HEK293 (cell line): ENCODE measurements at regions of chr17 and their contacts with region 1.

Region 1: DNA sequence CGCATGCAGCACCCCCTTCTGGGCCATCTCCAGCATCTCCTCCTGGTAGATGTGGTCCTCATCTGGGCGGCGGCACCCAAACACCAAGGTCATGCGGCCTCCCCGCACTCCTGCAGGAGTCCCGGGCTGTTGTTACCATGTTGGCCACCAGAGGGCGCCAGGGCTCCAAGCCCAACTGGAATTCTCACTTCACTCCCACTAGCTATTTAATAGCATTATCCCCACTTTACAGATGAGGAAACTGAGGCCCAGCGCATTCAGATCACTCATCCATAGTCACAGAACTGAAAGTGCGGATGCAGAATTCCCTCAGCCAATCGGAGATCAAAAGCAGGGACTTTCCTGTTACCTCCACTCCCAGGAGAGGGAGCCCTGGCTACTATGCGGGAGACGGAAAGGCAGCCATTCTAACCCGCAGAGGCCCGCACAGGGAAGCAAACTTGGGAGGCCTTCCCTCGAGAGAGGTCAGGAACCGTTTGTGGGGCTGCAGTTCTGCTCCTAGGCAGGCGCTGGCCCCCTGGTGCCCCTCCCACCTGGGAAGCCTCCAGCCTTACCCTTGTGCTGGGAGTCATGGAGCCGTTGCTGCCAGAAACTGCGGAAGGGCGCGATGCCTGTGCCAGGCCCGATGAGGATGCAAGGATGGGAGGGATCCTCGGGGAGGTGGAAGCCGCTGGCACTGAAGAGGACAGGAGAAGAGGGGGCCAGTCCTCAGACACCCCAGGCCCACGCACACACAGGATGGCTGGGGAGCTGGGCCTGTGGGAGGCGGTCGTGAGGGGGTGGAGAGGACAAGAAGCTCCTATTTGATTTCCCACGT is 40.1 kb downstream of the NOS2 start:
- H3K4me3 ChIP-seq: no peak overlapping the region
- H3K27ac ChIP-seq: no peak overlapping the region
- H3K4me1 ChIP-seq: no peaks in the 10 kb centered on the region
- CTCF ChIP-seq: peak; percentile 87

Region 2: DNA sequence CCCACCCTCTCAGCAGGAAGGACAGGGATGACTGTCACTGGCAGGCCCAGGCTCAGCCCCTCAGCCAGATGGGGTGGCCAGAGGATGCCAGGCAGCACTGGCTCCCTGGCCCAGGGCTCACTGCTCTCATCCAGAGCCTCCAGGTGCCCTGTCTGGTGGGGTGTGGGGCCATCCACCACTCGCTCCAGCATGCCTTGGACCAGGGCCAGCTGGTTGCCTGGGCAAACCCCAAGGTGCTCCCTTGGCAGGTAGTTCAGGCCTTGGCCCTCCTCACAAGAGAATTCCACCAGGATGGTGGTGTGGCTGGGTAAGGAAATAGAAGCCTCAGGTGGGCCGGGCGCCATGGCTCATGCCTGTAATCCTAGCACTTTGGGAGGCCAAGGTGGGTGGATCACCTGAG is 99.9 kb before region 1 on chr17:
- CTCF ChIA-PET with region 1: interaction called, 278 read pairs
- POLR2A ChIA-PET with region 1: no interaction called
- H3K4me3 ChIP-seq: no peak overlapping the region
- H3K27ac ChIP-seq: no peak overlapping the region
- H3K4me1 ChIP-seq: no peaks in the 10 kb centered on the region
- CTCF ChIP-seq: no peak

Region 3: GRCh38 chr17:27701963-27702362 is 58.3 kb before region 1 on chr17:
- CTCF ChIA-PET with region 1: interaction called, 12 read pairs
- POLR2A ChIA-PET with region 1: no interaction called
- H3K4me3 ChIP-seq: no peak overlapping the region
- H3K27ac ChIP-seq: no peak overlapping the region; the same call in 1 of the 2 replicates
- H3K4me1 ChIP-seq: no peaks in the 10 kb centered on the region
- CTCF ChIP-seq: no peak

Region 4: GRCh38 chr17:27733773-27734172 is 26.5 kb before region 1 on chr17:
- CTCF ChIA-PET with region 1: interaction called, 11 read pairs
- POLR2A ChIA-PET with region 1: no interaction called
- H3K4me3 ChIP-seq: no peak overlapping the region
- H3K27ac ChIP-seq: no peak overlapping the region
- H3K4me1 ChIP-seq: no peaks in the 10 kb centered on the region
- CTCF ChIP-seq: no peak

Region 5: GRCh38 chr17:27741361-27741861 is 18.9 kb before region 1 on chr17:
- CTCF ChIA-PET with region 1: interaction called, 24 read pairs
- POLR2A ChIA-PET with region 1: no interaction called
- H3K4me3 ChIP-seq: no peak overlapping the region
- H3K27ac ChIP-seq: no peak overlapping the region
- H3K4me1 ChIP-seq: no peaks in the 10 kb centered on the region
- CTCF ChIP-seq: no peak

Region 6: DNA sequence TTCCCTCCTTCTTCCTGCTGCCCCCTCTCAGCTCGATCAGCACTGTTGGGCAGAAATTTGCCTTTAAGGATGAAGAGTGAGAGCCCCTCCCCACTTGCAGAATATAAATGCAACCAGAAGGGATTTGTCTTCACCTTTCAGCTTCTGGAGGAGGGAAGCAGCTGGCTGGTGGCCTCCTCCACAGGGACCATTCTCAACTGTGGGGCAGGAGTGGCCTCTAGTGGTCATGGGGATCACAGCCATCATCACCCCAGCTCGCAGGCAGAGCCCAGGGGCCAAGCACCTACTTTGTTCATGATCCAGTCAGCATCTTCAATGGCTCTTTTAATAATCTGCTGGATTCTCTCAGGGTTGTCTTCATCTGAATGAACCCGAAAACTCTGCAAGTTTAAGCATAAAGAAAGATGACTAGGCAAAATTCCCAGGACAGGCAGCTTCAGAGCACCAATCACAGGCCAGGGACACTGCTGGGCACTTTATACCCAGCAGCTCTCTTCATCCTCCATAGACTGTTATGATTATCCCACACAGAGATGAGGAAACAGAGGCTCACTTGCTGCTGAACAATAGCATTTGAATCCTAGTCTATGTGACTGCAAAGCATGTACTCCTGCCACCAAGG is 119.8 kb after region 1 on chr17:
- CTCF ChIA-PET with region 1: interaction called, 227 read pairs
- POLR2A ChIA-PET with region 1: interaction called, 4 read pairs
- H3K4me3 ChIP-seq: no peak overlapping the region
- H3K27ac ChIP-seq: no peak overlapping the region
- H3K4me1 ChIP-seq: no peaks in the 10 kb centered on the region
- CTCF ChIP-seq: peak; percentile 73